Endothelial cell of umbilical vein (primary cell): ENCODE measurements at regions of chr14 and their contacts with region 1.

Region 1: GRCh38 chr14:77151918-77152588 is 10.5 kb upstream of the ZDHHC22 start:
- DNase-seq: peak; percentile 28
- H3K4me3 ChIP-seq: no peak overlapping the region
- H3K27ac ChIP-seq: no peak overlapping the region
- H3K4me1 ChIP-seq: no peaks in the 10 kb centered on the region
- H3K27me3 ChIP-seq: peaks cover 11 to 19% of the 10 kb centered on the region in 2 experiments
- CTCF ChIP-seq: no peak
- POLR2A ChIP-seq: no peak

Region 2: GRCh38 chr14:76595266-76595665 is 556.8 kb before region 1 on chr14:
- CTCF ChIA-PET with region 1: no interaction called
- POLR2A ChIA-PET with region 1: no interaction called
- dilution Hi-C with region 1: no loop called
- intact Hi-C with region 1: no loop called
- DNase-seq: no peak
- H3K4me3 ChIP-seq: no peak overlapping the region
- H3K27ac ChIP-seq: no peak overlapping the region
- H3K4me1 ChIP-seq: no peaks in the 10 kb centered on the region
- H3K27me3 ChIP-seq: peaks cover 4 to 7% of the 10 kb centered on the region in 2 experiments
- CTCF ChIP-seq: no peak
- POLR2A ChIP-seq: no peak

Region 3: DNA sequence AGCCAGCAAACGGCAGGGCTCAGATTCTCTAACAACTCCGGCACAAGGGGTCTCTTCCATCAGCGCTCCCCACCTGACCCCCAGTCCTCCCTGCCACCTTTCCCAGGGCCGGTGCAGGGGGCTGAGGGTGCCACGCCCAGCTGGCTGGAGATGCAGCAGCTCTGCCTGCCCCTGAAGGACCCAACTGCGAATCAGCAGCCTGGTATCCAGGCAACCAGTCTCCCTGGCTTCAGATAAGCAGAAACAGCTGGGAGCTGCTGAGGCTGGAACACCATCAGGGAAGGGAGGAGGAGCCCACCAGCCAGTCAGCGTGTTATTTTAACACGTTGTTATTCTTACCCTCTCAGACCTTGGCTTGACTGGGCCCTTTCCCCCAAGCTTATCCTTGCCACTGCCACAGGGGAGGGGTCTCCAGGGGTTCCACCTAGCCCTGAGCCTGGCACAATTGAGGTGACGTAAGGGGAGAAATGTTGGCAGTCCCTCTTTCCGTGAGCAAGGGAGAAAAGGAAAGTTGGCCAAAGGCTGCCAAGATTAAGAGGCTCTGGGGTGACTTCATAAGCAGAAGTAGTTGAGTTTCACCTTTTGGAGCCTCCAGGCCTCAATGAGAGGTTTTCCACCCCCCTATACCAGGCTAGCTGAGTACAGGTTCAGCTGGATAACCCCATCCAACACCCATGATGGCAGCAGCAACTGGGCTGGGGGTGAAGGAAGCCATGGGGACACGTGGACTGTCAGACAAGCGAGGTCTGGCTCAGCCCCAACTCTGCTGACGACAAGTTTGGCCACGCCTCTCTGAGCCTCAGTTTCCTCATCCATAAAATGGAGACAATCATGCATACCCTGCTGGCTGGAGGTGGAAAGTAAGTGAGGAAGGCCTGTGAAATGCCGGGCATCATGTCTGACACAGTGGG is 214.6 kb before region 1 on chr14:
- CTCF ChIA-PET with region 1: no interaction called
- POLR2A ChIA-PET with region 1: no interaction called
- dilution Hi-C with region 1: no loop called
- intact Hi-C with region 1: no loop called
- DNase-seq: peak; percentile 15
- H3K4me3 ChIP-seq: no peak overlapping the region
- H3K27ac ChIP-seq: no peak overlapping the region
- H3K4me1 ChIP-seq: no peaks in the 10 kb centered on the region
- H3K27me3 ChIP-seq: no peaks in the 10 kb centered on the region
- CTCF ChIP-seq: no peak
- POLR2A ChIP-seq: no peak

Region 4: GRCh38 chr14:77139540-77140358 is 12.3 kb before region 1 on chr14:
- CTCF ChIA-PET with region 1: interaction called, 20 read pairs
- POLR2A ChIA-PET with region 1: no interaction called
- dilution Hi-C with region 1: no loop called
- intact Hi-C with region 1: no loop called
- DNase-seq: no peak
- H3K4me3 ChIP-seq: peak overlapping the region in 1 of 3 experiments; percentile 9
- H3K27ac ChIP-seq: no peak overlapping the region
- H3K4me1 ChIP-seq: peaks cover 13% of the 10 kb centered on the region
- H3K27me3 ChIP-seq: peaks cover 47 to 49% of the 10 kb centered on the region in 2 experiments
- CTCF ChIP-seq: peak; percentile 67 to 89
- POLR2A ChIP-seq: no peak

Region 5: DNA sequence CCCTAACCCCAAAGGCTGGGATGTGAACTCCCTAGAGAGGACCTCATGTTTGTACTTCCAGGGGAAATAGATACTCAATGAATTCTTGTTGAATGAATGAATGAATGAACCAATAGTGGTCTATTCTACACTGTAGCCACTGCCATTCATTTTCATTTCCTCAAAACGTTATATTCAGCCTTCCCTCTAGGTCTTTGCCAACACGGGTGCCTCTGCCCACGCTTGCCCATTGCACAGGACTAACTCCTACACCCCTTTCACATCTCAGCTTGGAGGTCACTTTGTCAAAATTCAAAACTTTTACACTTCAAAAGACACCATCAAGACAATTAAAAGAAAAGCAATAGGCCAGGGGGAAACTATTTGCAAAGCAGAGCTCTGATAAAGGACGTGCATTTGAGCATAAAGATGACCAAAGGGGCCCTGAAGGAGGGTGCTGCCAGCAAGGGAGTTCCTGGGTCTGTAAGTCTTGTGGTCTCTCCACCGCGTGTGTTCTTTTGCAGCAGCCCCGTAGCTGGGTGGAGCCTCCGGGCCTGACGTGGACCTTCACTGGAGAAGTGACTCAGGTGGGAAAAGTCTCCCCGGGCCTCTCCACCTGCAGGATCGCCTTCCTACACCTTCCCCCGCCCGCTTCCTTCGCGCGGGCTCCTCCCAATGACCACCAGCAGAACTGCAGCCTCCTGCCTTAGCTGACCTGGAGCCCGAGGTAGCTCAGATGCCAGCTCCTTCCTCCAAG is 61.1 kb after region 1 on chr14:
- CTCF ChIA-PET with region 1: interaction called, 32 read pairs
- POLR2A ChIA-PET with region 1: no interaction called
- dilution Hi-C with region 1: no loop called
- intact Hi-C with region 1: loop called (anchors 2 kb)
- DNase-seq: no peak
- H3K4me3 ChIP-seq: no peak overlapping the region
- H3K27ac ChIP-seq: no peak overlapping the region
- H3K4me1 ChIP-seq: no peaks in the 10 kb centered on the region
- H3K27me3 ChIP-seq: peaks cover 0 to 2% of the 10 kb centered on the region in 2 experiments
- CTCF ChIP-seq: peak; percentile 41 to 71
- POLR2A ChIP-seq: no peak

Region 6: DNA sequence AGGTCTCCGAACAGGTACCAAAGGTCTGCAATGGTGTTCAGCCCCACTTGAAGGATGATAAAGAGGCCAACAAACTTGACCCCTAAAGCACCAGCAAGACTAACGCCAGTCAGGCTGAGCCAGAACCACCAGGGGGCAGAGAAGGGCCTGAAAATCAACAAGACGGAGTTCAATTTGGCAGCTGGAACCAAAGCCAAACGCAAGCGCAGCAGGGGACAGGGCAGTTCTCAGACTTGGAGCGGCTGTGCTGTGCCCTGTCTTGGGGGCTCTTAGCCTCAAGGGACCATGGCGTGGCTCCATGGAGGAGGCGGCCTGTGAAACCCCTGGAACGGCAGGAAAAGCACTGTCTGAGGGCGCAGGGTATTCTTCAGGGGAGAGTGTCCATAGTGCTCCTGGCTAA is 149.1 kb after region 1 on chr14:
- CTCF ChIA-PET with region 1: interaction called, 10 read pairs
- POLR2A ChIA-PET with region 1: no interaction called
- dilution Hi-C with region 1: no loop called
- intact Hi-C with region 1: loop called (anchors 1 kb)
- DNase-seq: peak; percentile 74
- H3K4me3 ChIP-seq: no peak overlapping the region
- H3K27ac ChIP-seq: no peak overlapping the region
- H3K4me1 ChIP-seq: peaks cover 29% of the 10 kb centered on the region
- H3K27me3 ChIP-seq: no peaks in the 10 kb centered on the region
- CTCF ChIP-seq: peak; percentile 85
- POLR2A ChIP-seq: no peak